ENCODE measurements at regions of chr14 and their contacts with region 1.

Region 1: DNA sequence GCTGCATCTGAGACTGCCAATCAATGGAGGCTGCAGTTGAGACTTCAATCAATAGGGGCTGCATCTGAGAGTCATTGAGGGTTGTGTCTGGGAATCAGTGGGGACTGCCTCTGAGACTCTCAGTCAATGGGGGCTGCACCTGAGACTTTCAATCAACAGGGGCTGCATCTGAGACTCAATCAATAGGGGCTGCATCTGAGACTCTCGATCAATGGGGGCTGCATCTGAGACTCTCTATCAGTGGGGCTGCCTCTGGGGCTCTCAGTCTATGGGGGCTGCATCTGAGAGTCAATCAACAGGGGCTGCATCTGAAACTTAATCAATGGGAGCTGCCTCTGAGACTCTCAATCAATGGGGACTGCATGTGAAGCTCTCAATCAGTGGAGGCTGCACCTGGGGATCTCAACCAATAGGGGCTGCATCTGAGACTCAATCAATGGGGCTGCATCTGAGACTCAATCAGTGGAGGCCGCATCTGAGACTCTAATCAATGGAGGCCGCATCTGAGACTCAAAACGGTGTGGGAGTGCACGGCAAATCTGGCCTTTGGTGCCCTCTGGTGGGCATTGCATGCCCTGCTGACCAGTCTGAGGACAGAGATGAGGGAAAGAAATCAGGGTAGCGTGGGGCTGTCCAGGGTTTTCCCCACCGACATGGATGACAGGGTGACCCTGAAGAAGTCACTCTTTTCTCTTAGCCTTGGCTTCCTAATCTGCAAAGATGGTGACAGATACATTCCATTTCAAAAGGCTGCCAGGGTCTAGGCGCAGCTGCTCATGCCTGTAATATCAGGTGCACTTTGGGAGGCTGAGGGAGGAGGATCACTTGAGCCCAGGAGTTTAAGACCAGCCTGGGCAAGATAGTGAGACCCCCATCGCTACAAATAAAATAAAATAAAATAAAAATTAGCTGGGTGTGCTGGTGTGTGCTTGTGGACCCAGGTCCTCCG is 41.3 kb upstream of the EIF5 start:
- DNase-seq: peak; percentile 57 to 90 (median 76)
- ATAC-seq: peak; percentile 94
- H3K4me3 ChIP-seq: no peak overlapping the region
- H3K27ac ChIP-seq: no peak overlapping the region
- H3K4me1 ChIP-seq: peaks cover 0 to 4% of the 10 kb centered on the region in 2 donors
- H3K27me3 ChIP-seq: peaks cover 0 to 13% of the 10 kb centered on the region in 2 donors
- CTCF ChIP-seq: peak; percentile 74 to 91

Region 2: GRCh38 chr14:103084021-103084919 is 208.4 kb before region 1 on chr14 and contains the start of gene LBHD2:
- intact Hi-C with region 1: loop called in 1 of 2 experiments (anchors 5 kb)
- DNase-seq: peak in 1 of 4 donors; percentile 79
- ATAC-seq: peak; percentile 53
- H3K4me3 ChIP-seq: no peak within 1 kb of the TSS
- H3K27ac ChIP-seq: no peak within 1 kb of the TSS
- H3K4me1 ChIP-seq: no peaks in the 10 kb centered on the region
- H3K27me3 ChIP-seq: peaks cover 18 to 62% of the 10 kb centered on the region in 2 donors
- CTCF ChIP-seq: no peak
- polyA plus RNA-seq, gene LBHD2: not detected

Region 3: DNA sequence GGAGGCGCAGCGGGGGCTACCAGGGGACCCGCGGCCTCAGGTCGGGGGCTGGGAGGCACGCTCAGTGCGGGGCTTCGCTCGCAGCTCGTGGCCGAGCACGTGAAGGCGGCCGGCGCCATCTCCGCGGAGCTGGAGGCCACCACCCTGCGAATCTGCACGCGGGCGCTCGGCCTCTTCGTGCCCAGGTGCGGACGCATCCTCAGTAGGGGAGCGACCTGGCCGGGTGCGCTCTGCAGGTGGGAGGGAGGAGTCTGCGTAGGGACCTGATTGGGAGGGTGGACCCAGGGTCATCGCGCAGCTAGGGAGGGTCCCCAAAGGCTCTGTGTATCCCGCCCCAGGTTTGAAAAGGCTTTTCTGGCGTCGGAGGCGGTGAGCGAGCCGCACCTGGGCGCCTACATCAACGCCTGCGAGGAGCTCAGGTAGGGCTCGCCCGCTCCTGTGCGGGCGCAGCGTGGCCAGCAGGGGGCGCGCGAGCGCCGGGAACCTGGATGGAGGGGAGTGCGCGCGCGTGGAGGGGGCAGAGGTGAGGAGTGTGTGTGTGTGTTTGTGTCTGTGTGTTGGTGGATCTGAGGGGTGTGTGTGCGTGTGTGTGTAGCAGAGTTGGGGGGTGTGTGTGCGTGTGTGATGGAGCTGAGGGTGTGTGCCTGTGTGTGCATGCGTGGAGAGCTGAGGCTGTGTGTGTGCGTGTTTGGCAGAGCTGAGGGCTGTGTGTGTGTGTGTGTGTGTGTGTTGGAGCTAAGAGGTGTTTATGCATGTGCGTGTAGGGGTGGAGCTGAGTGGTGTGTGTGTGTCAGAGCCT is 187.8 kb before region 1 on chr14:
- intact Hi-C with region 1: loop called in 1 of 2 experiments (anchors 10 kb)
- DNase-seq: peak in 3 of 4 donors; percentile 71 to 97 (median 75)
- ATAC-seq: peak; percentile 86
- H3K4me3 ChIP-seq: no peak overlapping the region
- H3K27ac ChIP-seq: no peak overlapping the region
- H3K4me1 ChIP-seq: peaks cover 17 to 48% of the 10 kb centered on the region in 2 donors
- H3K27me3 ChIP-seq: peaks cover 32 to 65% of the 10 kb centered on the region in 2 donors
- CTCF ChIP-seq: peak; percentile 88 to 98